ENCODE measurements at regions of chr22 and their contacts with region 1.

Region 1: DNA sequence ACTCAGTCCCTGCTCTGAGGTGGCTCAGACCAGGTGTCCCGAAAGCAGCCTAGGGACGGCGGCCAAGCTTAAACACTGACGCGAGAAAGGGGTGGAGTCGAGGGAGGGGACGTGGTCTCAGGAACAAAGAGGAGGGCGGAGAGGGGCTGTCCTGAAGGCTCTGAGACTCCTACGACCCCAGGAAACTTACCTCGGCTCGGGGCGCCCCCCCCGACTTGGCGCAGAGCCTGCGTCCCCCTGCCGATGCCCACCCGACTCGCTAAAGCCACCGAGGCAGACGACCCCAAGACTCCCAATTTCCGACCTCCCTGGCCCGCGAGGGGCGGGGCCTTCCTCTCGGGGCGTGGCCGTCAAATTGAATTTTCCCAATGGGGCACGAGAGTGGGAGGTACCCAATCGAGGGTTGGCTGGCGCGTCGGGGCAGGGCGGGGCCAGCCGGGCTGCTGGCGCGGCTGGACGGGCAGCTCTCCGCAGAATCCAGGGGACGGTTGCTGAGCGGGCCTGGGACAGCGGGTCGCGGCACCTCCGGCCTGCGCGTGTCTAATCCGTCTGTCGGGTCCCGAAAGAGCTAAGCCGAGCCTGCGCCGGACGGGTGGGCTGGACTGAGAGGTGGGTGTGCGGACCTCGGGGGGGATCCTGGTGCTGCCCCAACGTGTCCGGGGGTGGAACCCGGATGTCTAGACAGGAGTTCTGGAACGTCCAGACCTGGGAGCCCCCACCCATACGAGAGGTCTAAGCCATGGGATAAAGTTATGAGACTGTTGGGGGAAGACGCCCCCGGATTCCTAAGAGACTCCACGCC is at the start of gene SMTN:
- DNase-seq: peak; percentile 75 to 94 (median 90)
- ATAC-seq: peak; percentile 72
- H3K4me3 ChIP-seq: peak within 1 kb of the TSS; percentile 73 to 81
- H3K4me3 Mint-ChIP-seq: peak within 1 kb of the TSS; percentile 88
- H3K27ac ChIP-seq: no peak within 1 kb of the TSS
- H3K27ac Mint-ChIP-seq: peak within 1 kb of the TSS; percentile 37
- H3K4me1 ChIP-seq: peaks cover 32% of the 10 kb centered on the region
- H3K4me1 Mint-ChIP-seq: peaks cover 36% of the 10 kb centered on the region
- H3K27me3 ChIP-seq: no peaks in the 10 kb centered on the region
- H3K27me3 Mint-ChIP-seq: no peaks in the 10 kb centered on the region
- CTCF ChIP-seq: no peak
- total RNA-seq, gene SMTN: 4.0 to 4.9 TPM

Region 2: DNA sequence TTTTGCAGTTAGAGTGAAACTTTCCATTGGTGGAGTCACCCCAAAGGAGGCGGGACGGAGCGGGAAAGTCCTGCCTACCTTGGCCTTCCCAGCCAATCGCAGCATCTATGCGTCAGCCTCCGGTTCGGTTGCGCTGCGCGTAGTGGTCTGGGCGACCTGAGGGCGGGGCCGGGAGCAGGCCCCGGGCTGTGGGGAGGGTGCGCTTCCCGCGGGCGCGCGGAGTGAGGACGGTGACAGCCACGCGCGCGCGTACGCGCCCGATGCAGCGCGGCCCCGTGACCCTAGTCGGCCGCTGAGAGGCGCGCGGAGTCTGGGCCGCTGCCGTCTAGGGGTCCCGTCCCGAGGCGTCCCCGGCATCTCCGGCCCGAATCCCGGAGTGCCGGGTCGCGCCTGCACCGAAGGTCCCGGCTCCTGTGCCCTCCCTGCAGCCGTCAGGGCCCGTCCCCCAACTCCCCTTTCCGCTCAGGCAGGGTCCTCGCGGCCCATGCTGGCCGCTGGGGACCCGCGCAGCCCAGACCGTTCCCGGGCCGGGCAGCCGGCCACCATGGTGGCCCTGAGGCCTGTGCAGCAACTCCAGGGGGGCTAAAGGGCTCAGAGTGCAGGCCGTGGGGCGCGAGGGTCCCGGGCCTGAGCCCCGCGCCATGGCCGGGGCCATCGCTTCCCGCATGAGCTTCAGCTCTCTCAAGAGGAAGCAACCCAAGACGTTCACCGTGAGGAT is 1477.5 kb before region 1 on chr22 and contains the start of gene NF2:
- CTCF ChIA-PET with region 1: no interaction called
- POLR2A ChIA-PET with region 1: no interaction called
- intact Hi-C with region 1: loop called in 1 of 2 experiments (anchors 10 kb)
- DNase-seq: peak; percentile 96 to 100 (median 98)
- ATAC-seq: peak; percentile 98
- H3K4me3 ChIP-seq: peak within 1 kb of the TSS; percentile 77 to 86
- H3K4me3 Mint-ChIP-seq: peak within 1 kb of the TSS; percentile 93
- H3K27ac ChIP-seq: peak within 1 kb of the TSS; percentile 84 to 90
- H3K27ac Mint-ChIP-seq: peak within 1 kb of the TSS; percentile 97
- H3K4me1 ChIP-seq: peaks cover 18% of the 10 kb centered on the region
- H3K4me1 Mint-ChIP-seq: peaks cover 25% of the 10 kb centered on the region
- H3K27me3 ChIP-seq: no peaks in the 10 kb centered on the region
- H3K27me3 Mint-ChIP-seq: no peaks in the 10 kb centered on the region
- CTCF ChIP-seq: no peak
- total RNA-seq, gene NF2: 22.6 to 23.2 TPM

Region 3: GRCh38 chr22:30423982-30424963 is 656.8 kb before region 1 on chr22:
- CTCF ChIA-PET with region 1: no interaction called
- POLR2A ChIA-PET with region 1: no interaction called
- intact Hi-C with region 1: loop called in 1 of 2 experiments (anchors 10 kb)
- DNase-seq: peak; percentile 94 to 100 (median 98)
- ATAC-seq: peak; percentile 76
- H3K4me3 ChIP-seq: peak overlapping the region; percentile 64 to 69
- H3K4me3 Mint-ChIP-seq: peak overlapping the region; percentile 93
- H3K27ac ChIP-seq: peak overlapping the region; percentile 89 to 91
- H3K27ac Mint-ChIP-seq: peak overlapping the region; percentile 97
- H3K4me1 ChIP-seq: peaks cover 41% of the 10 kb centered on the region
- H3K4me1 Mint-ChIP-seq: peaks cover 63% of the 10 kb centered on the region
- H3K27me3 ChIP-seq: no peaks in the 10 kb centered on the region
- H3K27me3 Mint-ChIP-seq: no peaks in the 10 kb centered on the region
- CTCF ChIP-seq: no peak

Region 4: GRCh38 chr22:30763815-30764686 is 317.0 kb before region 1 on chr22:
- CTCF ChIA-PET with region 1: interaction called, 17 read pairs
- POLR2A ChIA-PET with region 1: no interaction called
- intact Hi-C with region 1: loop called (anchors 1 kb)
- DNase-seq: peak in 8 of 9 experiments; percentile 7 to 78 (median 48)
- ATAC-seq: peak; percentile 90
- H3K4me3 ChIP-seq: no peak overlapping the region
- H3K4me3 Mint-ChIP-seq: no peak overlapping the region
- H3K27ac ChIP-seq: no peak overlapping the region
- H3K27ac Mint-ChIP-seq: no peak overlapping the region
- H3K4me1 ChIP-seq: no peaks in the 10 kb centered on the region
- H3K4me1 Mint-ChIP-seq: peaks cover 2% of the 10 kb centered on the region
- H3K27me3 ChIP-seq: no peaks in the 10 kb centered on the region
- H3K27me3 Mint-ChIP-seq: no peaks in the 10 kb centered on the region
- CTCF ChIP-seq: peak; percentile 52

Region 5: DNA sequence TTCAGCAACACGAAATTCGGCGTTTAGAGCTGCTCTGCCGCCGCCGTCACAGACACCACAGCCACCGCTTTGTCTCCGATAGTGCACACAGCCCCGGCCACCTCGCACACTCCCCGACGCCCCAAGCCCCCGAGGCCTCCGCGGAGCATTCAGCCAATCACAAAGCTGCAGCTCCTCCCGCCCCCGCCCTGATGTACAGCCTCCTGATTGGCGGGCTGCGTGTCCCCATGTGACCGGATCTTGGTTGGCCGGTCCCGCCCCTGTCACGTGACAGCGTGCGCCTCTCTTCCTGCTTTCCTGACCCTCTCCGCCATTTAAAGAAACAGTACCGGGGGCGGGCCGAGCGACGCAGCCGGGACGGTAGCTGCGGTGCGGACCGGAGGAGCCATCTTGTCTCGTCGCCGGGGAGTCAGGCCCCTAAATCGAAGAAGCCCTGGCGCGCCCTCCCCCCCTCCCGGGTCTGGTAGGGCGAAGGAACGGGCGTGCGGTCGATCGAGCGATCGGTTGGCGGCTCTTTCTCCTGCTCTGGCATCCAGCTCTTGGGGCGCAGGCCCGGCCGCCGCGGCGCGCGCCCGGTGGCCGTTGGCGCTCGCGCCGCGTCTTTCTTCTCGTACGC is 112.0 kb before region 1 on chr22 and contains the start of gene TUG1:
- CTCF ChIA-PET with region 1: interaction called, 12 read pairs
- POLR2A ChIA-PET with region 1: interaction called, 15 read pairs
- intact Hi-C with region 1: loop called (anchors 1 kb)
- DNase-seq: peak; percentile 94 to 99 (median 97)
- ATAC-seq: peak; percentile 93
- H3K4me3 ChIP-seq: peak within 1 kb of the TSS; percentile 69 to 81
- H3K4me3 Mint-ChIP-seq: peak within 1 kb of the TSS; percentile 97
- H3K27ac ChIP-seq: peak within 1 kb of the TSS; percentile 75 to 91
- H3K27ac Mint-ChIP-seq: peak within 1 kb of the TSS; percentile 98
- H3K4me1 ChIP-seq: peaks cover 21% of the 10 kb centered on the region
- H3K4me1 Mint-ChIP-seq: peaks cover 51% of the 10 kb centered on the region
- H3K27me3 ChIP-seq: no peaks in the 10 kb centered on the region
- H3K27me3 Mint-ChIP-seq: no peaks in the 10 kb centered on the region
- CTCF ChIP-seq: no peak
- total RNA-seq, gene TUG1: 74.9 to 79.0 TPM

Region 6: GRCh38 chr22:31046539-31047226 is 34.4 kb before region 1 on chr22:
- CTCF ChIA-PET with region 1: no interaction called
- POLR2A ChIA-PET with region 1: no interaction called
- intact Hi-C with region 1: no loop called
- DNase-seq: no peak
- ATAC-seq: no peak
- H3K4me3 ChIP-seq: no peak overlapping the region
- H3K4me3 Mint-ChIP-seq: no peak overlapping the region
- H3K27ac ChIP-seq: no peak overlapping the region
- H3K27ac Mint-ChIP-seq: no peak overlapping the region
- H3K4me1 ChIP-seq: no peaks in the 10 kb centered on the region
- H3K4me1 Mint-ChIP-seq: no peaks in the 10 kb centered on the region
- H3K27me3 ChIP-seq: no peaks in the 10 kb centered on the region
- H3K27me3 Mint-ChIP-seq: peaks cover 3% of the 10 kb centered on the region
- CTCF ChIP-seq: no peak

Region 7: GRCh38 chr22:31148953-31149627 is 68.0 kb after region 1 on chr22:
- CTCF ChIA-PET with region 1: no interaction called
- POLR2A ChIA-PET with region 1: no interaction called
- intact Hi-C with region 1: no loop called
- DNase-seq: peak in 5 of 9 experiments; percentile 16 to 53 (median 40)
- ATAC-seq: peak; percentile 56
- H3K4me3 ChIP-seq: no peak overlapping the region
- H3K4me3 Mint-ChIP-seq: no peak overlapping the region
- H3K27ac ChIP-seq: no peak overlapping the region
- H3K27ac Mint-ChIP-seq: no peak overlapping the region
- H3K4me1 ChIP-seq: no peaks in the 10 kb centered on the region
- H3K4me1 Mint-ChIP-seq: no peaks in the 10 kb centered on the region
- H3K27me3 ChIP-seq: no peaks in the 10 kb centered on the region
- H3K27me3 Mint-ChIP-seq: peaks cover 3% of the 10 kb centered on the region
- CTCF ChIP-seq: no peak

Region 8: GRCh38 chr22:31211862-31212730 is 131.0 kb after region 1 on chr22 and contains the start of gene LIMK2:
- CTCF ChIA-PET with region 1: interaction called, 3 read pairs
- POLR2A ChIA-PET with region 1: no interaction called
- intact Hi-C with region 1: loop called (anchors 1 to 2 kb)
- DNase-seq: peak; percentile 93 to 99 (median 97)
- ATAC-seq: peak; percentile 99
- H3K4me3 ChIP-seq: peak within 1 kb of the TSS; percentile 87 to 99
- H3K4me3 Mint-ChIP-seq: peak within 1 kb of the TSS; percentile 88
- H3K27ac ChIP-seq: peak within 1 kb of the TSS; percentile 50 to 80
- H3K27ac Mint-ChIP-seq: peak within 1 kb of the TSS; percentile 92
- H3K4me1 ChIP-seq: peaks cover 30% of the 10 kb centered on the region
- H3K4me1 Mint-ChIP-seq: peaks cover 45% of the 10 kb centered on the region
- H3K27me3 ChIP-seq: no peaks in the 10 kb centered on the region
- H3K27me3 Mint-ChIP-seq: no peaks in the 10 kb centered on the region
- CTCF ChIP-seq: peak; percentile 72
- total RNA-seq, gene LIMK2: 8.4 to 9.1 TPM

Region 9: GRCh38 chr22:31630331-31631329 is 549.6 kb after region 1 on chr22:
- CTCF ChIA-PET with region 1: no interaction called
- POLR2A ChIA-PET with region 1: no interaction called
- intact Hi-C with region 1: loop called in 1 of 2 experiments (anchors 10 kb)
- DNase-seq: peak; percentile 69 to 94 (median 87)
- ATAC-seq: peak; percentile 92
- H3K4me3 ChIP-seq: peak overlapping the region; percentile 77 to 79
- H3K4me3 Mint-ChIP-seq: peak overlapping the region; percentile 90
- H3K27ac ChIP-seq: peak overlapping the region; percentile 85 to 98
- H3K27ac Mint-ChIP-seq: peak overlapping the region; percentile 94
- H3K4me1 ChIP-seq: peaks cover 40% of the 10 kb centered on the region
- H3K4me1 Mint-ChIP-seq: peaks cover 51% of the 10 kb centered on the region
- H3K27me3 ChIP-seq: no peaks in the 10 kb centered on the region
- H3K27me3 Mint-ChIP-seq: no peaks in the 10 kb centered on the region
- CTCF ChIP-seq: no peak